MCF 10A (cell line): ENCODE measurements at regions of chr6 and their contacts with region 1.

Region 1: DNA sequence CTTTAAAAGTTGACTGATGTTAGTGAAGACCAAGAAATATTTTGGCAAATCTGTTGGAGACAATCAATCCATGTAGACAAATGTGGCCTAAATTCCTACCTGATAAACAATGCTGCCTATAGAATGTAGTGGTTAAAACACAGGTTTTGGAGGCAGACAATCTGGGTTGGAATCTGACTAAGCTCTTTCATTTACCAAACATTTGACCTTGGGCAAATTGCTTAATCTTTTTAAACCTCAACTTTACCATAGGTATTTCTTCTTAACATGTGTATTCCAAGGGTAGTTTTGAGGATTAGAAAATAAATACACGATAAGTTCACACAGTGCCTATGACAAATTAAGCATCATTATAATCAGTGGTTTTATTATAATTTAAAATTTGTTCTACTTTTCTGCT is 11.5 kb downstream of the RHAG start:
- DNase-seq: no peak
- H3K4me3 Mint-ChIP-seq: no peak overlapping the region
- H3K27ac Mint-ChIP-seq: no peak overlapping the region
- H3K4me1 Mint-ChIP-seq: no peaks in the 10 kb centered on the region
- H3K27me3 Mint-ChIP-seq: no peaks in the 10 kb centered on the region
- CTCF ChIP-seq: no peak

Region 2: DNA sequence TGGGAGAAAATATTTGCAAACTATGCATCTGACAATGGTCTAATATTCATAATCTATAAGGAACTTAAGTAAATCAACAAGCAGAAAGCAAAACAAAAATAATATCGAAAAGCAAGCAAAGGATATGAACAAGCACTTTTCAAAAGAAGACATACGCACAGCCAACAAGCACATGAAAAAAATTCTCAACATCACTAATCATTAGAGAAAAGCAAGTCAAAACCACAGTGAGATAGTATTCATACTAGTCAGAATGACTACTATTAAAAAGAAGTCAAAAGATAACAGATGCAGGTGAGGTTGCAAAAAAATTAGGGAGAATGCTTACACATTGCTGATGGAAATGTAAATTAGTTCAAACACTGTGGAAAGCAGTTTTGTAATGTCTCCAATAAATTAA is 572.2 kb before region 1 on chr6:
- CTCF ChIA-PET with region 1: no interaction called
- POLR2A ChIA-PET with region 1: no interaction called
- intact Hi-C with region 1: no loop called
- DNase-seq: no peak
- H3K4me3 Mint-ChIP-seq: no peak overlapping the region
- H3K27ac Mint-ChIP-seq: no peak overlapping the region
- H3K4me1 Mint-ChIP-seq: peaks cover 7% of the 10 kb centered on the region
- H3K27me3 Mint-ChIP-seq: no peaks in the 10 kb centered on the region
- CTCF ChIP-seq: no peak

Region 3: DNA sequence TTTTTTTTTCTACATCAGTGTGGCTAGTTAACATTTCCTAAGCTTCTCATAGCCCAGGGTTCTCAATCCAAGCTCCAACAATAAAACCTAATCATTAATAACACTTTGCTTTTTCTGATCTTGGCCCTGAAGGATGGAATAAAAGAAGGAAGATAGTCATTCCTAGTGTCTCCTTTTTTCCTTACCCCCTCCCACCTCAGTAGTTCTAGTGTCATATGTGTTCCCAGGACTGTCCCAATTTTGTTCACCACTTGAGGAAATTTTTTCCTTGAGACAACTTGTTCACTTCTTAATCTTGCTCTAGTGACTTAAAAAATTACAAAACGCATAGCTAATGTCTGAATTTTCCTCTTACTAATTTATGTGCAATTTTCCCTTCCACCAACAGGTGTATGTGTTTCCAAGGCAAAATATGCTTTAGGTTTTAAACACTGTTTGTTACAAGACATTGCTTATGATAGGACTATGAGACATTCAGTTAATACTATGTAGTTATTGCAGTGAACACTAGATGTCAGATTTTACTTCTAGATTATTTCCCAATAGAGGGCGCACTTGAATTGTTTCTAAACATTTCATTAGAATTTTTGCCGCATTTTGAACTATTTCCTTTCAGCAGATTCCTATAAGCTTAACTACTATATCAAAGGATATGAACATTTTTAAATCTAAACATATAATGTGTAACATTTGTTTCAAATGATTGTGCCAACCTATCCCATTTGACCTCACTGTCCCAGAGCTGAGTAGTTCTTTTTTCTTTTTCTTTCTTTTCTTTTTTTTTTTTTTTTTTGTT is 93.2 kb before region 1 on chr6:
- CTCF ChIA-PET with region 1: interaction called, 16 read pairs
- POLR2A ChIA-PET with region 1: no interaction called
- intact Hi-C with region 1: no loop called
- DNase-seq: peak; percentile 72
- H3K4me3 Mint-ChIP-seq: peak overlapping the region; percentile 31
- H3K27ac Mint-ChIP-seq: no peak overlapping the region
- H3K4me1 Mint-ChIP-seq: peaks cover 6% of the 10 kb centered on the region
- H3K27me3 Mint-ChIP-seq: no peaks in the 10 kb centered on the region
- CTCF ChIP-seq: peak; percentile 90

Region 4: GRCh38 chr6:49649988-49650387 is 24.8 kb after region 1 on chr6:
- CTCF ChIA-PET with region 1: no interaction called
- POLR2A ChIA-PET with region 1: no interaction called
- intact Hi-C with region 1: no loop called
- DNase-seq: no peak
- H3K4me3 Mint-ChIP-seq: no peak overlapping the region
- H3K27ac Mint-ChIP-seq: no peak overlapping the region
- H3K4me1 Mint-ChIP-seq: no peaks in the 10 kb centered on the region
- H3K27me3 Mint-ChIP-seq: peaks cover 86% of the 10 kb centered on the region
- CTCF ChIP-seq: no peak

Region 5: DNA sequence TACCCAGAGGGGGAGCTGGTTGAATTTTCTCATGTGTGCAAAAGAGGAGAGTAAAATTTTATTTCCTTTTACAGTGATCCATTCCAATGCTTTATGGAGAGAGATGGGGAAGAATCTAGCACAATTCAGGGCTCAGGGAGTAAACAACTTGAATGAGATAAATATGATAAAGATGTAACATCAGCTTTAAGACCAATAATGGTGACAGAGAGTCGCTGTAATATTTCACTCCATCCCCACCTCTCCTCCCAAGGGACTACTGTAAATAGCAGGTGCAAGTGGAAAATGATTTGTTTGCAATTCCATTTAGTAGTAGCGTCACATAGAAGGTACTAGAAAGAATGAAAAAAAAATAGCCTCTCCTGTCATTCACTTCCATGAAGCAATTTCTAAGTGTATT is 114.3 kb after region 1 on chr6:
- CTCF ChIA-PET with region 1: no interaction called
- POLR2A ChIA-PET with region 1: no interaction called
- intact Hi-C with region 1: no loop called
- DNase-seq: no peak
- H3K4me3 Mint-ChIP-seq: no peak overlapping the region
- H3K27ac Mint-ChIP-seq: no peak overlapping the region
- H3K4me1 Mint-ChIP-seq: no peaks in the 10 kb centered on the region
- H3K27me3 Mint-ChIP-seq: peaks cover 66% of the 10 kb centered on the region
- CTCF ChIP-seq: no peak

Region 6: DNA sequence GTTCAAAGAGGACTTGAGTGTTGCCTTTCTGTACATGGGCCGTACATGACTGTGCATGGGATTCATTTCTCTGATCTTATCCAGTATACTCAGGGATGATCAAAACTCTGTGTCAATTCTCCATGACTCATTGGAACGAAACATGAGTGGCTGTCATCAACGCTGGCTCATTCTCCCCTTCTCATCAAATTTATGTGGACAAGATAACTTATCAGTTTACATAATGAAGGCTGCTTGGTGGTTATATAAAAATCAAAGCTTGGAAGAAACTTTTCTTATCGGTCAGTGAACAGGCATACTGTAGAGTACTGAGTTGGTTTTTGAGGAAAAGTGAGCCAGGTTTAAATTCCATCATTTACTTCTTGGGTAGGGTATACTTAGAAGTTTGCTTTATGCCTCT is 216.3 kb after region 1 on chr6:
- CTCF ChIA-PET with region 1: interaction called, 10 read pairs
- POLR2A ChIA-PET with region 1: no interaction called
- intact Hi-C with region 1: no loop called
- DNase-seq: no peak
- H3K4me3 Mint-ChIP-seq: no peak overlapping the region
- H3K27ac Mint-ChIP-seq: no peak overlapping the region
- H3K4me1 Mint-ChIP-seq: no peaks in the 10 kb centered on the region
- H3K27me3 Mint-ChIP-seq: peaks cover 66% of the 10 kb centered on the region
- CTCF ChIP-seq: no peak

Region 7: DNA sequence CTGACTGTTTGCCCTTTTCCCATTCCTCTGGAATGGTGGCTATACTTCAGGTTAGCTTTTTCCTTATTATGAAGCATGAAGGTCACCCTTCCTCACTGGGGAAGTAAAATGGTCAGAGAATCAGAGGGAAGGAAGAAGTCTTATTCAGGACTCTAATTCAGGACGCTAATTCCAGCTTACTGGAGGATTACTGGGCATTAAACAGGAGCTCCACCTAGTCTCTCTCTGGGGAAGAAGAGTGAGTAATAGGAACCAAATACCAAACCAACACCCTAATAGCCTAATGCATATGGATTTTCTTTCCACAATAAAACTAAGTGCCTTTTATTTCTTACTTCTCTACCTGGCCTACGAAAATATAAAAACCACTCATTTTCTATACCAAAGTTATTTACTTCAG is 231.1 kb after region 1 on chr6:
- CTCF ChIA-PET with region 1: interaction called, 104 read pairs
- POLR2A ChIA-PET with region 1: interaction called, 3 read pairs
- intact Hi-C with region 1: no loop called
- DNase-seq: no peak
- H3K4me3 Mint-ChIP-seq: no peak overlapping the region
- H3K27ac Mint-ChIP-seq: no peak overlapping the region
- H3K4me1 Mint-ChIP-seq: no peaks in the 10 kb centered on the region
- H3K27me3 Mint-ChIP-seq: no peaks in the 10 kb centered on the region
- CTCF ChIP-seq: no peak

Region 8: DNA sequence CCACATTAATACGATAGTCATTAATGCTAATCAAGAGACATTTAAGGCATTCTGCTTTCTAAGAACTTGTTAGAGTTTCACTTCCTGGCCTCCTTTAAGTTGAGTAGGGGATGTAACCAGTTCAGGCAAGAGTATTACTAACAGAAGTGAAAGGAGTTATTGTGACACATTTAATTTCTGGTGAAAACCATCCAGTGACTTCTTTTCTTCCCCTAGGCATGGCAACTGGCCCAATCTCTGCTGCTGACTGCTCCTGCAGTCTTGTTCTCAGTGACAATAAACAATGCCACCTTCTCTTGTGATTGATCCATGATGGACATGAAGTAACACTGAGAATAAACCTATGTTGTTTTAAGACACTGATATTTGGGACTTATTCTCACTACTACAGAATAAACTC is 555.5 kb after region 1 on chr6:
- CTCF ChIA-PET with region 1: no interaction called
- POLR2A ChIA-PET with region 1: no interaction called
- intact Hi-C with region 1: no loop called
- DNase-seq: no peak
- H3K4me3 Mint-ChIP-seq: no peak overlapping the region
- H3K27ac Mint-ChIP-seq: no peak overlapping the region
- H3K4me1 Mint-ChIP-seq: no peaks in the 10 kb centered on the region
- H3K27me3 Mint-ChIP-seq: peaks cover 27% of the 10 kb centered on the region
- CTCF ChIP-seq: no peak

Region 9: DNA sequence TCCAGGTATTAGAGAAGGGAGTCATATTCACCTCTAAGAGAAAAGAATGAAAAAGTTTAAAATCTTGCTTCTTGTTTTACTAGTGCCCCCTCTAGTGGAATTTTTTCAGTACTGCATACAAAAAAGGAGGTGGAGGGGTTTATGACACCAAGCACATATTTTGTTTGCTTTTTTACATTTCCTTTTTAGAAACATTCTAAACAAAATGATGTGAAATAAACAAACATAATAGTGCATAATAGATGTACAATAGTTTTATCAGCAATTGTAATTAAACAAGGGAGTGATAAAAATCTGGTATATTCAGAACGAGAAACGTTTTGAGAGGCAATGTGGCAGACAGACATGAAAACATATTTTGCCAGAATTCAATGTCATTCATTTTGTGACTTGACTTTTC is 977.2 kb after region 1 on chr6:
- CTCF ChIA-PET with region 1: no interaction called
- POLR2A ChIA-PET with region 1: no interaction called
- intact Hi-C with region 1: loop called (anchors 5 kb)
- DNase-seq: peak; percentile 50
- H3K4me3 Mint-ChIP-seq: no peak overlapping the region
- H3K27ac Mint-ChIP-seq: no peak overlapping the region
- H3K4me1 Mint-ChIP-seq: no peaks in the 10 kb centered on the region
- H3K27me3 Mint-ChIP-seq: peaks cover 54% of the 10 kb centered on the region
- CTCF ChIP-seq: peak; percentile 61